CD8-positive, alpha-beta memory T cell (primary cell): ENCODE measurements at regions of chr20 and their contacts with region 1.

Region 1: DNA sequence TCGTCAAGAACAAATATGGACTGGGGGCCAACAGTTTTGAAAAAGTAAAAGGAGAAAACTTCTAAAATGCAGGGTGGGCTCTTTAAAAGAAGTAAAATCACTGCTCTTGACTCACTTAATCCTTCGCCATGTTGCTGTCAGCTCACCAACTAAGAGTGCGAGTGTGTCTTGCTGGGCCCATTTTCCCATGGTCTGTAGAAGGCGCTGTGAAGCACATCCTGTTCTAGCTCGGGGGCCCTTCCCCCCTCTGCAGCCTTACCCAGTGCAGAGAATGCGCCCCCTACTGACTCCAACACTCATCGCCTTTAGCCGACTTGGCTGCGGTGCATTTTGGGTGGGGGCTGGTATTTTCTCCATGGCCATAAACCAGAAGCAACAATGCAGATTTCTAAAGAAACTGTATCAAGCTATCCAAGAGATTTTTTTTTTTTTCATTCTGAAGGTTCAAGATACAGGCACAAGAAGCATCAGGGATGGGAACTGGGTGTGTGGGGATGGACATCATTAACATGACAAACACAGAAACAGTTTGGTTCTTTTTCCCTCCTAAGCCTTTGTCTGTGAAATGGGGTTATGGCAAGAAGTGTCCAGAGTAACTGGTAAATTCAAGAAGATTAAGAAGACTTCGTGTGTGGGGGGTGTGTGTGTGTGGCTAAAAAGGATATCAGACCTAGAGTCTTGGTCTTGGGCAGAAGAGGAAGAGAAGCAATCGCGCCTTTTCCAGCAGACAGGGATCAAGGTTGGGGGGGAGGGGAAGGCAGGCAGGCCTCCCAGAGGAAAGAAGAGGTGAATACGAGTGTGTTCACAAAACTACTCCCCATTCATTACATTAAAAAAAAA is 1.7 kb downstream of the ADNP start:
- DNase-seq: peak; percentile 84 to 94 (median 90)
- H3K4me3 ChIP-seq: peak overlapping the region; percentile 74
- H3K4me3 Mint-ChIP-seq: peak overlapping the region; percentile 88 to 98 (median 96)
- H3K27ac ChIP-seq: peak overlapping the region; percentile 57
- H3K27ac Mint-ChIP-seq: peak overlapping the region; percentile 89 to 100 (median 97)
- H3K4me1 ChIP-seq: peaks cover 52% of the 10 kb centered on the region
- H3K4me1 Mint-ChIP-seq: peaks cover 49 to 64% (median 63%) of the 10 kb centered on the region in 3 donors
- H3K27me3 ChIP-seq: no peaks in the 10 kb centered on the region
- H3K27me3 Mint-ChIP-seq: no peaks in the 10 kb centered on the region

Region 2: DNA sequence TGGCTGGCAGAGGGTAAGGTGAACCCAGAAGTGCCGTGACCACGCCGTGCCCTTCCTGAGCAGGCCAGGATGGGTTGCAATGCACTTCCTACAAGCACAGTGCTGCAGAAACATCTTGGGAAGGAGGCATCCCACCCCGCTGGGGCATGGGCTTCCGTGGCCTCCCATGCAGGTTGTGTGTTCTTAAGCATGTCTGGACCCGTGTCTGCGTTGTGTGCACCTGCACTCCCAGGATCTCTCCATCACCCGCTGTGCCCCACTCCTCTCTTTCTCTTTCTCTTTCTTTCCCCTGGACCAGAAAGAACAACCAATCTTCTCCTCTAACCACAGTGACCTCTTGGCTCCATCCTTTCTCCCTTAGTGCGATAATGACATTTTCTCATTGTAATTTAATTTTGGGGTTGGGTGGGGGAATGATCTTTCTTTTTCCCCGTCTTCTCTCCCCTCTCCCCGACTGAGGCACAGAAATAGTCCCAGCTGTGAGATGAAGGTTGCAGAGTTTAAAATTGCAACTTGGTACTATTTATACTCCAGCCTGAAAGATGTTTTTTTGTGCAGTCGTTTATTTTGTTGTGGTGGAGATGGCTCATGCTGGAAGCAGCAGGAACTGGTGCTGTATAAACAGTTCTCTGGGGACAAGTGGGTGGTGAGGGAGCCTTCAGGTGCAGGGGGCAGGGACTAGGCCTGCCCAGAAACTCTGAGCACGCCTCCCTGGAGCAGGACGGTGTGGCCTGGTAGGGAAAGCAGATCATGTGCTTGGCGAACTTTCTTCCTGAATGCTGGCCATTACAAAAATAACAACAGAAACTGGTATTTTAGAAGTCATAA is 114.1 kb before region 1 on chr20:
- CTCF ChIA-PET with region 1: interaction called, 56 read pairs
- POLR2A ChIA-PET with region 1: interaction called, 27 read pairs
- DNase-seq: peak in 1 of 5 donors; percentile 22
- H3K4me3 ChIP-seq: peak overlapping the region; percentile 10
- H3K4me3 Mint-ChIP-seq: peak overlapping the region; percentile 39 to 83 (median 55)
- H3K27ac ChIP-seq: no peak overlapping the region
- H3K27ac Mint-ChIP-seq: peak overlapping the region; percentile 11 to 85 (median 80)
- H3K4me1 ChIP-seq: peaks cover 30% of the 10 kb centered on the region
- H3K4me1 Mint-ChIP-seq: peaks cover 37 to 76% (median 40%) of the 10 kb centered on the region in 3 donors
- H3K27me3 ChIP-seq: no peaks in the 10 kb centered on the region
- H3K27me3 Mint-ChIP-seq: no peaks in the 10 kb centered on the region

Region 3: GRCh38 chr20:50913690-50914375 is 15.7 kb before region 1 on chr20:
- CTCF ChIA-PET with region 1: interaction called, 32 read pairs
- POLR2A ChIA-PET with region 1: interaction called, 4 read pairs
- DNase-seq: no peak
- H3K4me3 ChIP-seq: no peak overlapping the region
- H3K4me3 Mint-ChIP-seq: peak overlapping the region in 4 of 7 donors; percentile 15 to 51 (median 46)
- H3K27ac ChIP-seq: no peak overlapping the region
- H3K27ac Mint-ChIP-seq: peak overlapping the region in 7 of 8 donors; percentile 29 to 83 (median 64)
- H3K4me1 ChIP-seq: peaks cover 70% of the 10 kb centered on the region
- H3K4me1 Mint-ChIP-seq: peaks cover 81 to 93% (median 93%) of the 10 kb centered on the region in 3 donors
- H3K27me3 ChIP-seq: no peaks in the 10 kb centered on the region
- H3K27me3 Mint-ChIP-seq: no peaks in the 10 kb centered on the region

Region 4: DNA sequence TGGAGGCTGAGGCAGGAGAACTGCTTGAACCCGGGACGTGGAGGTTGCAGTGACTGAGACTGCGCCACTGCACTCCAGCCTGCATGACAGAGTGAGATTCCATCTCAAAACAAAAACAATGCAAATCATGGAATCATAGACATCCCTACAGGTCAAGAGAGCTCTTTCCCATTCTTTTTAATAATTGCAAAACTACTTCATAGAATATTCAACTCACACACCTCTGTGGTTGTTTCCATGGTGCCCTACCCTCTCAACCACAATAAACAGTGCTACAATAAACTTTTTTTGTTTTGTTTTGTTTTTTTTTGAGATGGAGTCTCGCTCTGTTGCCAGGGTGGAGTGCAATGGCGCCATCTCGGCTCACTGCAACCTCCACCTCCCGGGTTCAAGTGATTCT is 13.6 kb after region 1 on chr20:
- CTCF ChIA-PET with region 1: interaction called, 11 read pairs
- POLR2A ChIA-PET with region 1: no interaction called
- DNase-seq: peak in 1 of 5 donors; percentile 19
- H3K4me3 ChIP-seq: no peak overlapping the region
- H3K4me3 Mint-ChIP-seq: no peak overlapping the region
- H3K27ac ChIP-seq: no peak overlapping the region
- H3K27ac Mint-ChIP-seq: peak overlapping the region in 2 of 8 donors; percentile 27 to 36
- H3K4me1 ChIP-seq: no peaks in the 10 kb centered on the region
- H3K4me1 Mint-ChIP-seq: peaks cover 0 to 5% (median 0%) of the 10 kb centered on the region in 3 donors
- H3K27me3 ChIP-seq: no peaks in the 10 kb centered on the region
- H3K27me3 Mint-ChIP-seq: no peaks in the 10 kb centered on the region

Region 5: GRCh38 chr20:50958615-50959542 is 29.4 kb after region 1 on chr20 and contains the start of gene MOCS3:
- CTCF ChIA-PET with region 1: interaction called, 51 read pairs
- POLR2A ChIA-PET with region 1: interaction called, 87 read pairs
- DNase-seq: peak; percentile 77 to 92 (median 90)
- H3K4me3 ChIP-seq: peak within 1 kb of the TSS; percentile 91
- H3K4me3 Mint-ChIP-seq: peak within 1 kb of the TSS; percentile 95 to 98 (median 98)
- H3K27ac ChIP-seq: peak within 1 kb of the TSS; percentile 97
- H3K27ac Mint-ChIP-seq: peak within 1 kb of the TSS; percentile 99 to 100 (median 100)
- H3K4me1 ChIP-seq: peaks cover 34% of the 10 kb centered on the region
- H3K4me1 Mint-ChIP-seq: peaks cover 51 to 80% (median 68%) of the 10 kb centered on the region in 3 donors
- H3K27me3 ChIP-seq: no peaks in the 10 kb centered on the region
- H3K27me3 Mint-ChIP-seq: no peaks in the 10 kb centered on the region
- total RNA-seq, gene MOCS3: 7.9 to 8.1 TPM